Panc1 (cell line): ENCODE measurements at regions of chr3 and their contacts with region 1.

Region 1: GRCh38 chr3:195863121-195864006 is 45.0 kb downstream of the TNK2 start:
- DNase-seq: peak; percentile 38
- ATAC-seq: peak; percentile 96
- H3K4me3 ChIP-seq: no peak overlapping the region
- H3K27ac ChIP-seq: no peak overlapping the region
- H3K4me1 ChIP-seq: peaks cover 10% of the 10 kb centered on the region; the same call in 1 of the 2 replicates
- H3K27me3 ChIP-seq: no peaks in the 10 kb centered on the region
- CTCF ChIP-seq: peak; percentile 99

Region 2: GRCh38 chr3:195197765-195198425 is 665.5 kb before region 1 on chr3:
- CTCF ChIA-PET with region 1: no interaction called
- POLR2A ChIA-PET with region 1: no interaction called
- in situ Hi-C with region 1: no loop called
- intact Hi-C with region 1: no loop called
- DNase-seq: no peak
- ATAC-seq: no peak
- H3K4me3 ChIP-seq: no peak overlapping the region
- H3K27ac ChIP-seq: peak overlapping the region; percentile 53
- H3K4me1 ChIP-seq: peaks cover 34% of the 10 kb centered on the region
- H3K27me3 ChIP-seq: no peaks in the 10 kb centered on the region
- CTCF ChIP-seq: no peak

Region 3: DNA sequence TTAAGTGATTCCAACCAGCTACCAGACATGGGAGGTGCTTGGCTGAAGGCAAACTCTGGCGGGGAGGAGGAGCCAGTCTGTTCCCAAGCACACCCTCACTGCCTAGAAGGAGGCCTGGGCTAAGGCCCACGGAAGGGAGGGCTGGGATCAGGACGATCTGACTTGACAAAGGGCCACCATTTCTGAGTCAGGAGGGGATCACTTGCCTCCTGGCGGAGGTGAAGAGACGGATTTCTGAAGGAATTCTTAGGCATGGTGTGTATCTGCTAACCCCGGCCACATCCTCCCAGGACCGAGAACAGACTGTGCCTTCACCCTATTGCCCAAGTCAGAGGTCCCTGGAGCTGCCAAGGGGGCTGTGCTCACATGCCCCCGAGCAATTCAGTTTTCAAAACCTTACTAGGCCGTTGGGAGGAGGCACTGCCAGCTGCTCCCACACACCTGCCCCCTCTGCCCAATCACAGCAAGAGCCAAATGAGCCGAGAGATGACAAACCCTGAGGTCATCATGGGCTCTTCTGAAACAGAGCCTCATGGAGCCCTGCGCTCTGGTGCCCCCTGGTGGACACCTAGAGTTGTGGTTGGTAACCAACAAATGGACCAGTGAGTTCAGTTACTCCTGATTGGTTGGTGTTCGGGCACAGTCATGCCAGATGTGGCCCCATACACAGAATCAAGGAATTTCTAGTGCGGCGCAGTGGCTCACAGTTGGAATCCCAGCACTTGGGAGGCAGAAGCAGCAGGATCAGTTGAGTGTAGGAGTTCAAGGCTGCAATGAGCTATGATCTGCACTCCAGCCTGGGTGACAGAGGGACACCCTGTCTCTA is 51.5 kb after region 1 on chr3:
- CTCF ChIA-PET with region 1: interaction called, 6 read pairs
- POLR2A ChIA-PET with region 1: no interaction called
- in situ Hi-C with region 1: no loop called
- intact Hi-C with region 1: loop called (anchors 1 kb)
- DNase-seq: peak; percentile 88
- ATAC-seq: peak; percentile 93
- H3K4me3 ChIP-seq: peak overlapping the region in 1 of 2 experiments; percentile 26; a peak in 2 of 4 replicates
- H3K27ac ChIP-seq: peak overlapping the region; percentile 61
- H3K4me1 ChIP-seq: peaks cover 26% of the 10 kb centered on the region
- H3K27me3 ChIP-seq: no peaks in the 10 kb centered on the region
- CTCF ChIP-seq: peak; percentile 99

Region 4: GRCh38 chr3:196115678-196116083 is 252.3 kb after region 1 on chr3:
- CTCF ChIA-PET with region 1: no interaction called
- POLR2A ChIA-PET with region 1: no interaction called
- in situ Hi-C with region 1: no loop called
- intact Hi-C with region 1: no loop called
- DNase-seq: no peak
- ATAC-seq: no peak
- H3K4me3 ChIP-seq: no peak overlapping the region
- H3K27ac ChIP-seq: no peak overlapping the region
- H3K4me1 ChIP-seq: no peaks in the 10 kb centered on the region
- H3K27me3 ChIP-seq: no peaks in the 10 kb centered on the region
- CTCF ChIP-seq: no peak